CD8-positive, alpha-beta memory T cell (primary cell): ENCODE measurements at regions of chr15 and their contacts with region 1.

Region 1: GRCh38 chr15:78872972-78873792 is 492 bp downstream of the MORF4L1 start:
- DNase-seq: peak; percentile 80 to 94 (median 90)
- H3K4me3 ChIP-seq: peak overlapping the region; percentile 100
- H3K4me3 Mint-ChIP-seq: peak overlapping the region; percentile 99 to 100 (median 100)
- H3K27ac ChIP-seq: peak overlapping the region; percentile 100
- H3K27ac Mint-ChIP-seq: peak overlapping the region; percentile 100
- H3K4me1 ChIP-seq: peaks cover 41% of the 10 kb centered on the region
- H3K4me1 Mint-ChIP-seq: peaks cover 42 to 53% (median 43%) of the 10 kb centered on the region in 3 donors
- H3K27me3 ChIP-seq: no peaks in the 10 kb centered on the region
- H3K27me3 Mint-ChIP-seq: peaks cover 0 to 8% of the 10 kb centered on the region in 2 donors

Region 2: GRCh38 chr15:78859971-78860732 is 13.0 kb before region 1 on chr15:
- CTCF ChIA-PET with region 1: interaction called, 13 read pairs
- POLR2A ChIA-PET with region 1: interaction called, 14 read pairs
- DNase-seq: peak; percentile 42 to 82 (median 65)
- H3K4me3 ChIP-seq: peak overlapping the region; percentile 35
- H3K4me3 Mint-ChIP-seq: peak overlapping the region; percentile 81 to 89 (median 83)
- H3K27ac ChIP-seq: peak overlapping the region; percentile 11
- H3K27ac Mint-ChIP-seq: peak overlapping the region; percentile 55 to 90 (median 73)
- H3K4me1 ChIP-seq: peaks cover 5% of the 10 kb centered on the region
- H3K4me1 Mint-ChIP-seq: peaks cover 6 to 9% (median 9%) of the 10 kb centered on the region in 3 donors
- H3K27me3 ChIP-seq: no peaks in the 10 kb centered on the region
- H3K27me3 Mint-ChIP-seq: peaks cover 0 to 2% of the 10 kb centered on the region in 2 donors